Transverse colon (tissue), 4 donors: ENCODE measurements at regions of chr20 and their contacts with region 1.

Region 1: GRCh38 chr20:44210422-44211176 is at the start of gene OSER1:
- DNase-seq: peak; percentile 99
- H3K4me3 ChIP-seq: peak within 1 kb of the TSS; percentile 63 to 100 (median 90)
- H3K27ac ChIP-seq: peak within 1 kb of the TSS; percentile 97 to 100 (median 99)
- H3K4me1 ChIP-seq: peaks cover 8 to 53% (median 34%) of the 10 kb centered on the region in 4 donors
- H3K27me3 ChIP-seq: no peaks in the 10 kb centered on the region
- CTCF ChIP-seq: peak in 1 of 5 experiments; percentile 44
- EP300 ChIP-seq: peak; percentile 44
- POLR2A ChIP-seq: peak; percentile 99
- total RNA-seq, gene OSER1: 11.2 to 38.0 (median 26.2) TPM

Region 2: GRCh38 chr20:44310664-44311639 is 100.4 kb after region 1 on chr20 and contains the start of gene FITM2:
- in situ Hi-C with region 1: loop called in 3 of 4 experiments (anchors 5 to 10 kb)
- intact Hi-C with region 1: no loop called
- DNase-seq: peak; percentile 99
- H3K4me3 ChIP-seq: peak within 1 kb of the TSS; percentile 58 to 77 (median 64)
- H3K27ac ChIP-seq: peak within 1 kb of the TSS; percentile 64 to 88 (median 84)
- H3K4me1 ChIP-seq: peaks cover 0 to 21% (median 16%) of the 10 kb centered on the region in 4 donors
- H3K27me3 ChIP-seq: no peaks in the 10 kb centered on the region
- CTCF ChIP-seq: peak; percentile 87 to 98 (median 95)
- EP300 ChIP-seq: no peak
- POLR2A ChIP-seq: peak; percentile 53
- total RNA-seq, gene FITM2: 4.1 to 12.4 (median 9.7) TPM

Region 3: DNA sequence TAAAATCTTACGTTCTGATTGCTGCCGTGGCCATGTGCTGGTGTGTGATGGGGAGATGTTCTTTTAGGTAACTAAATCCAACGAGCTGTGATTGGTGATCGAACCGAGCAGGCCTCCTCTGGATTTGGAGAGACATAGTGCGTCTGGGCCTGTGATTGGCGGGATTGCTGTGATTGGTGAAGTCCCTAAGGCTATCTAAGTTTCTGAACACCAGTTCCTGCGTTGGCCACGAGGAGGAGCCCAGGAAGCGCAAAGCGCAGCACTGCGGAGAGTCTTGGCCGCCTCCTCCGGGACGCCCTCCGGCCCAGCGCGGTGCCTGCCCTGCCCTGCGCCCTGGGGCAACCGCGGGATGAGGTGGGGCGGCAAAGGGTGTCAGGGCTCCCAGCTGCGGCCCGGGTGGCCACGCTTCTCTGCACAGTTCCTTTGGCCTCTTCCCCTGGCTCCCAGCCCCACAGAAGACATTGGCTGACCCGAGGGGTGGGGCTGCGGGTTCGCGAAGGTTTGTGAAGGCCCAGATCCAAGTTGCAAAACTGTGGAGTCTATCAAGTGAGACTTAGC is 177.9 kb after region 1 on chr20:
- in situ Hi-C with region 1: loop called in 1 of 4 experiments (anchors 10 kb)
- intact Hi-C with region 1: no loop called
- DNase-seq: peak; percentile 85
- H3K4me3 ChIP-seq: no peak overlapping the region
- H3K27ac ChIP-seq: peak overlapping the region; percentile 5 to 58 (median 48)
- H3K4me1 ChIP-seq: peaks cover 0 to 43% (median 26%) of the 10 kb centered on the region in 4 donors
- H3K27me3 ChIP-seq: peaks cover 14% of the 10 kb centered on the region
- CTCF ChIP-seq: peak; percentile 67 to 90 (median 74)
- EP300 ChIP-seq: no peak
- POLR2A ChIP-seq: no peak

Region 4: GRCh38 chr20:44460795-44461141 is 250.2 kb after region 1 on chr20:
- in situ Hi-C with region 1: loop called (anchors 10 to 25 kb)
- intact Hi-C with region 1: no loop called
- DNase-seq: no peak
- H3K4me3 ChIP-seq: no peak overlapping the region
- H3K27ac ChIP-seq: peak overlapping the region; percentile 64 to 82 (median 76)
- H3K4me1 ChIP-seq: peaks cover 3 to 37% (median 18%) of the 10 kb centered on the region in 4 donors
- H3K27me3 ChIP-seq: no peaks in the 10 kb centered on the region
- CTCF ChIP-seq: peak; percentile 12 to 68 (median 43)
- EP300 ChIP-seq: no peak
- POLR2A ChIP-seq: no peak

Region 5: DNA sequence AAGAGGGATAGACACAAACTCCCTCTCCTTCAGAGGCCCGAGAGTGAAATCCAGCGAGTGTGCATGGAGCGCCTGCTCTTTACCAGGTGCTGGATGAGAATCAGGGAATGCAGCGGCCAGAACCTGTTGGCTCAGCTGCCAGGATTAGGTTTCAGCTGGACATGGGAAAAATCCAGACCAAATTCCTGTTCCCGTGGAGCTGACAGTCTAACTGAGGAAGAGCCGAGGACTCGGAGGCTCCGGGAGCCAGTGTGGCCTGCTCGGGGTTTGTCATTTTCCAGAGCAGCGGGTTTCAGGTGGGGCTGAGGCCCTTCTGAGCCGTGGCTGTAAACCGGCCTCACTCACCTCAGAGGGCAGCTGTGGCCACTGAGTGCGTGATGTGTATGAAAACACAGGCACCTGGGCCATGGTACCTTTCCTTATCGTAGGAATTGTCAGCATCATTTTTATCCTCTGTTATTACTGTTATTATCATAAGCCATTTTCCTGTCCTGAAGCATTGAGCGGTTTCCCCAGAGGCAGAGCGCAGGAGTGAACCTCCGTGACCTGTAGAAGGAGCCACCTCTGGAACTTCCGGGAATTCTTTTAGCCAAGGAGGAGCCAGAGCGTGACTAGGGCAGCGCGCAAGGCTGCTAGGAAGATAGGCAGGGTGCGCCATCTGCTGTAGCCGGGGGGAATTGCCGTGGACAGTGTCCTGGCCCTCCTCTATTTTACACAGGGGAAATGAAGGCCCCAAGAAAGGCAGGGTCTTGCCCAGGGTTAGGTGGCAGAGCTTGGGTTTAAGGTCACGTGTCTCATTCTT is 399.1 kb after region 1 on chr20:
- in situ Hi-C with region 1: loop called (anchors 25 kb)
- intact Hi-C with region 1: no loop called
- DNase-seq: peak; percentile 93
- H3K4me3 ChIP-seq: peak overlapping the region in 1 of 4 donors; percentile 29
- H3K27ac ChIP-seq: peak overlapping the region; percentile 82 to 90 (median 86)
- H3K4me1 ChIP-seq: peaks cover 10 to 34% (median 13%) of the 10 kb centered on the region in 4 donors
- H3K27me3 ChIP-seq: no peaks in the 10 kb centered on the region
- CTCF ChIP-seq: peak; percentile 96 to 98 (median 97)
- EP300 ChIP-seq: no peak
- POLR2A ChIP-seq: no peak